Stomach (tissue), 19 donors: ENCODE measurements at regions of chr7 and their contacts with region 1.

Region 1: DNA sequence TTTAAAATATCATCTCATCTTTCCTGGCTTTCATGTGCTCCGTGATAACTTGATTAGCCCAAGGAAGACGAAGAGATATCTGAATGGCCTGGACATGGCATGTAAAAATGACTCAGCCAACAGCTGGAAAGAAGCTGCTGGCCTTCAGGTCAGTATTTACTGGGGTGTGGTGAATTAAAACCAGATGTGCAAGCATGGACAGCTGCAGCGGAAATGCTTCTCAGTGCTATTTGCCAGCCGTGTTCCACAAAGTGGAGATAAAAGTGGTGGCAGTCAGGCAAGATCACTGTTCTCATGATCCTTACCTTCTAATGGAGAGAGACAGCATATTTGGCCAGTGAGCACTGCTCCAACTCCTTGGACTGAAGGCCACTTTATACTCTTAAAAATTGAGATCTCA is 203.1 kb upstream of the VSTM2A start:
- DNase-seq: peak in 1 of 2 donors; percentile 41
- H3K4me3 ChIP-seq: no peak overlapping the region
- H3K27ac ChIP-seq: no peak overlapping the region
- H3K4me1 ChIP-seq: no peaks in the 10 kb centered on the region
- H3K27me3 ChIP-seq: no peaks in the 10 kb centered on the region
- CTCF ChIP-seq: no peak
- EP300 ChIP-seq: no peak
- POLR2A ChIP-seq: no peak

Region 2: DNA sequence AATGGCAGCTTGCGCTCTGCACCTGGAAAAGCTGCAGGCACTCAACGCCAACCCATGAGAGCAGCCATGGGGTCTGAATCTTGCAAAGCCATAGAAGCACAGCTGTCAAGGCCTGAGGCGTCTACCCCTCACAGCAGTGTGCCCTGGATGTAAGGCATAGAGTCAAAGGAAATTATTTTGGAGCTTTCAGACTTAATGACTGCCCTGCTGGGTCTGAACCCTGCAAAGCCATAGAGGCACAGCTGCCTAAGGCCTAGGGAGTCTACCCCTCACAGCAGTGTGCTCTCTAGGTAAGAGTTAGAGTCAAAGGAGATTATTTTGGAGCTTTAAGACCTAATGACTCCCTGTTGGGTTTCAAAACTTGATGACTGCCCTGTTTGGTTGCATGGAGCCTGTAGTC is 503.8 kb before region 1 on chr7:
- intact Hi-C with region 1: no loop called
- DNase-seq: no peak
- H3K4me3 ChIP-seq: no peak overlapping the region
- H3K27ac ChIP-seq: no peak overlapping the region
- H3K4me1 ChIP-seq: no peaks in the 10 kb centered on the region
- H3K27me3 ChIP-seq: no peaks in the 10 kb centered on the region
- CTCF ChIP-seq: no peak
- EP300 ChIP-seq: no peak
- POLR2A ChIP-seq: no peak

Region 3: GRCh38 chr7:54141576-54141975 is 197.5 kb before region 1 on chr7:
- intact Hi-C with region 1: no loop called
- DNase-seq: peak in 1 of 2 donors; percentile 2
- H3K4me3 ChIP-seq: no peak overlapping the region
- H3K27ac ChIP-seq: no peak overlapping the region
- H3K4me1 ChIP-seq: no peaks in the 10 kb centered on the region
- H3K27me3 ChIP-seq: no peaks in the 10 kb centered on the region
- CTCF ChIP-seq: no peak
- EP300 ChIP-seq: no peak
- POLR2A ChIP-seq: no peak

Region 4: DNA sequence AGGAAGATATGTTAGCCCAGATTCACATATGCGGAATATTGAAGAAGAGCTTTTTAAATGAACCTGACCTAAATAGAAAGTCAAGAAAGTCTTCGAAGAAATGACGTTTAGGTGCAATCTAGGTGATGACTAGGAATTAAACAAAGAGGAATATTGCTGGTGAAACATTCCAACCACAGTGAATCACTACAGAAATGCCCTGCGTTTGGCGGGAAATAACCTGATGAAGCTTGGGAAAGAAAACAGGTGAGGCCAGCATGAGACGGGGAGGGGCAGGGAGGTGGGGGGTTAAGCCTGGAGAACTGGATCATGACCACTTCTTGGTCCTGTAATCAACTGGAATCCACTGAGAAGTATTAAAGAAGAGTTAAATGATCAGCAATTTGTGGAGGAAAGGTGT is 96.3 kb before region 1 on chr7:
- intact Hi-C with region 1: loop called (anchors 10 kb)
- DNase-seq: no peak
- H3K4me3 ChIP-seq: no peak overlapping the region
- H3K27ac ChIP-seq: no peak overlapping the region
- H3K4me1 ChIP-seq: no peaks in the 10 kb centered on the region
- H3K27me3 ChIP-seq: no peaks in the 10 kb centered on the region
- CTCF ChIP-seq: no peak
- EP300 ChIP-seq: no peak
- POLR2A ChIP-seq: no peak

Region 5: DNA sequence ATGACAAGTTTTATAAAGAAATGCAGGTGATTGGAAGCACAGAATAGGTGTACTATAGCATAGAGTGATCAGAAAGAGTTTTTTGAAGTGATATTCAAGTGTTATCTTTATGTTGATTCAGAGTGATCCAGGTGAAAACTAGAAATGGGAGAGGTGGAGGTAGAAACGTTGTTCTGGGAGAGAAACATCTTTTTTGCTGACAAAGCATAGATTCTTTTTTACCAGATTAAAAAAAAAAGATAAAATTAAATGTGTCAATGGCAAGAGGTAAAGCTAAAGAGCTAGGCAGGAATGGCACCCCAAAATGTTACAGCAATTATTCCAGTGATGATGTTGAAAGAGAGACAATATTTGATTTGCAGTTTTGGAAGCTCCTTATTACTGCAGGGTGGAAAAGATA is 190.5 kb after region 1 on chr7:
- intact Hi-C with region 1: no loop called
- DNase-seq: no peak
- H3K4me3 ChIP-seq: no peak overlapping the region
- H3K27ac ChIP-seq: no peak overlapping the region
- H3K4me1 ChIP-seq: no peaks in the 10 kb centered on the region
- H3K27me3 ChIP-seq: no peaks in the 10 kb centered on the region
- CTCF ChIP-seq: no peak
- EP300 ChIP-seq: no peak
- POLR2A ChIP-seq: no peak